ENCODE measurements at regions of chr17 and their contacts with region 1.

Region 1: GRCh38 chr17:35373534-35373983 is at the start of gene SLFN11:
- DNase-seq: peak; percentile 95
- H3K4me3 Mint-ChIP-seq: peak within 1 kb of the TSS; percentile 89
- H3K27ac Mint-ChIP-seq: peak within 1 kb of the TSS; percentile 93
- H3K4me1 Mint-ChIP-seq: peaks cover 51% of the 10 kb centered on the region
- H3K27me3 Mint-ChIP-seq: peaks cover 1% of the 10 kb centered on the region
- total RNA-seq, gene SLFN11: 72.3 and 73.6 TPM in 2 replicates

Region 2: DNA sequence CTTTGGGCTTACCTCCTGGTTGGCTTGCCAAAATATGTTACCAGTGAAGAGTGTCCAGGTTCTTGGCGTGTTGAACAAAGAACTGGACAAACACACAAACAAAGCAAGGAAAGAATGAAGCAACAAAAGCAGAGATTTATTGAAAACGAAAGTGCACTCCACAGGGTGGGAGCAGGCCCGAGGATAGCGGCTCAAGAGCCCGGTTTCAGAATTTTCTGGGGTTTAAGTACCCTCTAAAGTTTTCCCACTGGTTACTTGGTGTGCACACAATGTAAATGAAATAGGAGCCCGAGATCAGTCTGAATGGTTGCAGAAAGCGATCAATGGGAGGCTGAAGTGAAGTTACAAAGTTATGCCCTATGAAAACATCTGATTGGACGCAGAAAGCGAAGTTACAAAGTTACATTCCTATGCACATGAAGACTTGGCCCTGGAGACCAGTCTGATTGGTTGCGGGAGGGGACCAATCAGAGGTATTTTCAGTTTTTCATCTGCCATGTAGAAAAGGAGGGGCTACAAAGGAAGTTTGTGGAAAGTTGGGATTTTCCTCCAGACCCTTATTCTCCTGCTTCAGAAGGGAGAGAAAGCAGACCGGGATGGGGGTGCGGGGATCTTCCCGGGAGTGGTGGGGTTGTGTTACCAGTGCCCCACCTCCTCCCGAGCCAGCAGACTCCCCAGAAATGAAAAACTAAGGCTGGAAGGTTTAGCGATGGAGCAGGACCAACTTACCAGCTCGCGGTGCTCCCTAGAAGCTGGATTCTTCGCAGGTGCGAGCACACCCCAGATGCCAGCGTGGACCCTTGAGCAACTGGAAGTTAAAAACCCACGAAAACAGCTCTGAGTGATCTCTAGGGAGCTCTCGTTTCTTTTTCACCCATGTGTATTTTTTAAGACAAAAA is 58.9 kb after region 1 on chr17 and contains the start of gene SLFN12:
- intact Hi-C with region 1: loop called (anchors 1 kb)
- DNase-seq: peak; percentile 81
- H3K4me3 Mint-ChIP-seq: peak within 1 kb of the TSS; percentile 88
- H3K27ac Mint-ChIP-seq: peak within 1 kb of the TSS; percentile 92
- H3K4me1 Mint-ChIP-seq: peaks cover 51% of the 10 kb centered on the region
- H3K27me3 Mint-ChIP-seq: no peaks in the 10 kb centered on the region
- total RNA-seq, gene SLFN12: 5.0 and 7.8 TPM in 2 replicates

Region 3: DNA sequence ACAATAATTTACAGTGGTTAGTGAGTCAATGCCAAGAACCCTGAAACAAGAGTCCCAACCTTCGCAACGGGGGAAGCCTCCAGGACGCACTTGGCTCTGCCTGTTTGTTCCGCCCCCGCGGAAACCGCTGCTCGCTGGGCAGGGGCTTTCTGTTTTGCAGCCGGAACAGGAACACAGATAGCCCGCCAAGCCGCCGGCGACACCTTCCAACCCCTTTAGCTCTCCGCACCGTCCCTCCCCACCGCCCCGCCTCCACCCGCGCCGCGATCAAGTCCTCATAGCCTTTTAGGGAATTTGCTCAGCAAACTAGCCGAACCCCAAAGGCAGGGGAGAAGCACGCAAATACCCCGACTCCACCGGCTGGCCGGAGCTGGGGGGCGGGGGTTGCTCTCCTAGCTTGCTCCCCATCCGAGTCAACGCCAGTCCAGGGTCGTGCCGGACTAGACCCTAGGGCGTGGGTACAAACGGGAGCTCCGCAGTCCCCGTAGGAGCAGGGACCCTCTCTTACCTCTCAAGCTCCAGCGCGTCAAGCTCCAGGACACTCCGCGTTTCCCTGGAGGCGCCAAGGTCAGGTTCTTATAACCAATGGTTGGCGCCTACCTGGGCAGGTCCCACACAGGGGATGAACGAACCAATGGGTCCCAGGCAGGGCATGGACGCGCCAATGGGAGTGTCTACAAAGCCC is 74.8 kb after region 1 on chr17 and contains the start of gene SLFN13:
- intact Hi-C with region 1: loop called (anchors 2 kb)
- DNase-seq: peak; percentile 95
- H3K4me3 Mint-ChIP-seq: peak within 1 kb of the TSS; percentile 69
- H3K27ac Mint-ChIP-seq: peak within 1 kb of the TSS; percentile 77
- H3K4me1 Mint-ChIP-seq: peaks cover 13% of the 10 kb centered on the region
- H3K27me3 Mint-ChIP-seq: no peaks in the 10 kb centered on the region
- total RNA-seq, gene SLFN13: 34.5 and 36.8 TPM in 2 replicates

Region 4: DNA sequence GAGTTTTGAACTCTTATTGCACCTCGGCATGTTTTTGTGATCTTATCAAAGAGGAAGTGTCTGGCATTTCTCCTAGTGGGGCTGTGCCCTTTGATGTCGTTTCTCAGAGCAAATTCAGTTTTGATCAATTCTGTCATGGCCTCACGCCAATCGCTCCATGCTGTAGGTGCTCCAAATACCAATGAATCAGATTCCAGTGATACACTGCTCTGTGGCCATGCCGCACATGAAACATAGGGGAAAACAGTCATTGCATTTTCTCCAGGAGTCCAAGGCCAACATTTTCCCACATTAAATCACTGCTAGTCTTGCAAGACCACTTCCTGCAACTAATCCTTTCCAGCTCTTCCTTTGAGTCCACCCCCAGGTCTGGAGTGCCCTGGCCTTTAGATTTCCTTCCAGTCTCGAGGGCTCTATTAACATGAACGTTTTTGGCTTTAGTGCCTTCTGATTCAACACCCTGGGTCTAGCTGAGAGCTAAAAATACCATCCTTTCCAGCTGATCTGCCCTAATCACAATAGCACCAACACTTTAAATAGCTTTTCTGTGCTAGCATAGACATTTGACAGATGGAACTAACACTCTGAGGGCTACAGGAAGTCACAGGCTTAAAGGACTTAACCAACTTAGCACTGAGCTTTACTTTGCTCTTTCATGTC is 339.6 kb after region 1 on chr17:
- intact Hi-C with region 1: no loop called
- DNase-seq: no peak
- H3K4me3 Mint-ChIP-seq: no peak overlapping the region
- H3K27ac Mint-ChIP-seq: no peak overlapping the region
- H3K4me1 Mint-ChIP-seq: peaks cover 8% of the 10 kb centered on the region
- H3K27me3 Mint-ChIP-seq: no peaks in the 10 kb centered on the region

Measured in activated CD4-positive, alpha-beta T cell treated with anti-CD3 and anti-CD28 coated beads, Interleukin-2, amount 10 ng/mL, durations not matched to agents 24 days and 14 days (primary cell).